ENCODE measurements at regions of chr15 and their contacts with region 1.

Region 1: DNA sequence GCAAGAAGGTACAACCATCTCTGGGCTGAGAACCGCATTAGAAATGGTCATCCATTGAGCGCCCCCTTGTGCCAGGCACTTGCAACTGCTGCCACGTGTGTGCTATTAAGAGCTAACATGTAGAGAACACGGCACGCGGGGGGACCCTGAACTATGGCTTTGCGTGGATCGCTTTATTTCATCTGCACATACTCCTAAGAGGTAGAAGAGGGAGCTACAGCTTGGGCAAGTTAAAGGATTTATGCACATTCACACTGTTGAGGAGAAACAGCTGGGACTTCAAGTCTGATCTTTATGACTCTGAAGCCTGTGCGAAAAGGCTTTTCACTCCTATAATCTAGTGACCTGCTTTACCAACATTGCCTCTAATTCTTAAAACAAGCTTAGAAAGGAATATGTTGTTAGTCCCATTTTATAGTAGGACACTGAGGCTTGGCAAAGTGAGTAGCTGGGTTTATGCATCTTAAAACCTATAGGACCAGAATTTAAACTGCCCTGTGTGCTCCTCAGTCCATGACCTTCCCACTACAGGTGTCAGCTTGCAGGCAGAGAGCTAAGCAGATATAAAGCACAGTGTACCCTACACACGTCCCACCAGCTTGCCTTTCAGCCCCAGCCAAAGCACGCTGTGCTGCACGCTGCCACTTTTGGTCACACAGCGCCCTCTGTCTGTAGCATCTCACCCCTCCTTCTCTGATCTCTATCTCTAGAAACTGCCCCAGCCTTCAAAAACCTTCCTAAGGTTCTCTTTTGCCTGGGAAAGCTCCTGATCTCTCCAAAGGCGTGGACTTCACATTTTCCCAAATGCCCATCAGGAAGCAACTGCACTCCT is 57.8 kb downstream of the STARD5 start:
- DNase-seq: peak; percentile 64 to 88 (median 84)
- ATAC-seq: peak; percentile 84
- H3K4me3 ChIP-seq: peak overlapping the region; percentile 9 to 13
- H3K4me3 Mint-ChIP-seq: peak overlapping the region; percentile 78
- H3K27ac ChIP-seq: no peak overlapping the region
- H3K27ac Mint-ChIP-seq: peak overlapping the region; percentile 7
- H3K4me1 ChIP-seq: peaks cover 29% of the 10 kb centered on the region
- H3K4me1 Mint-ChIP-seq: peaks cover 47% of the 10 kb centered on the region
- H3K27me3 ChIP-seq: no peaks in the 10 kb centered on the region
- H3K27me3 Mint-ChIP-seq: no peaks in the 10 kb centered on the region
- CTCF ChIP-seq: peak; percentile 77

Region 2: GRCh38 chr15:80455668-80456442 is 810.3 kb before region 1 on chr15:
- CTCF ChIA-PET with region 1: interaction called, 7 read pairs
- POLR2A ChIA-PET with region 1: no interaction called
- intact Hi-C with region 1: loop called in 1 of 2 experiments (anchors 5 kb)
- DNase-seq: peak; percentile 21 to 76 (median 50)
- ATAC-seq: peak; percentile 31
- H3K4me3 ChIP-seq: no peak overlapping the region
- H3K4me3 Mint-ChIP-seq: no peak overlapping the region
- H3K27ac ChIP-seq: no peak overlapping the region
- H3K27ac Mint-ChIP-seq: no peak overlapping the region
- H3K4me1 ChIP-seq: no peaks in the 10 kb centered on the region
- H3K4me1 Mint-ChIP-seq: peaks cover 2% of the 10 kb centered on the region
- H3K27me3 ChIP-seq: no peaks in the 10 kb centered on the region
- H3K27me3 Mint-ChIP-seq: peaks cover 20% of the 10 kb centered on the region
- CTCF ChIP-seq: peak; percentile 91

Region 3: GRCh38 chr15:80989518-80990478 is 276.4 kb before region 1 on chr15 and contains the start of gene MESD:
- CTCF ChIA-PET with region 1: interaction called, 12 read pairs
- POLR2A ChIA-PET with region 1: interaction called, 3 read pairs
- intact Hi-C with region 1: loop called in 1 of 2 experiments (anchors 5 kb)
- DNase-seq: peak; percentile 91 to 99 (median 98)
- ATAC-seq: peak; percentile 100
- H3K4me3 ChIP-seq: peak within 1 kb of the TSS; percentile 70 to 96
- H3K4me3 Mint-ChIP-seq: peak within 1 kb of the TSS; percentile 100
- H3K27ac ChIP-seq: peak within 1 kb of the TSS; percentile 76 to 95
- H3K27ac Mint-ChIP-seq: peak within 1 kb of the TSS; percentile 99
- H3K4me1 ChIP-seq: peaks cover 50% of the 10 kb centered on the region
- H3K4me1 Mint-ChIP-seq: peaks cover 62% of the 10 kb centered on the region
- H3K27me3 ChIP-seq: no peaks in the 10 kb centered on the region
- H3K27me3 Mint-ChIP-seq: no peaks in the 10 kb centered on the region
- CTCF ChIP-seq: no peak
- total RNA-seq, gene MESD: 6.4 to 8.1 TPM

Region 4: GRCh38 chr15:81117136-81117535 is 149.0 kb before region 1 on chr15:
- CTCF ChIA-PET with region 1: interaction called, 11 read pairs
- POLR2A ChIA-PET with region 1: interaction called, 3 read pairs
- intact Hi-C with region 1: no loop called
- DNase-seq: no peak
- ATAC-seq: no peak
- H3K4me3 ChIP-seq: no peak overlapping the region
- H3K4me3 Mint-ChIP-seq: no peak overlapping the region
- H3K27ac ChIP-seq: no peak overlapping the region
- H3K27ac Mint-ChIP-seq: no peak overlapping the region
- H3K4me1 ChIP-seq: no peaks in the 10 kb centered on the region
- H3K4me1 Mint-ChIP-seq: no peaks in the 10 kb centered on the region
- H3K27me3 ChIP-seq: peaks cover 0 to 5% of the 10 kb centered on the region in 2 experiments
- H3K27me3 Mint-ChIP-seq: peaks cover 31% of the 10 kb centered on the region
- CTCF ChIP-seq: no peak

Region 5: DNA sequence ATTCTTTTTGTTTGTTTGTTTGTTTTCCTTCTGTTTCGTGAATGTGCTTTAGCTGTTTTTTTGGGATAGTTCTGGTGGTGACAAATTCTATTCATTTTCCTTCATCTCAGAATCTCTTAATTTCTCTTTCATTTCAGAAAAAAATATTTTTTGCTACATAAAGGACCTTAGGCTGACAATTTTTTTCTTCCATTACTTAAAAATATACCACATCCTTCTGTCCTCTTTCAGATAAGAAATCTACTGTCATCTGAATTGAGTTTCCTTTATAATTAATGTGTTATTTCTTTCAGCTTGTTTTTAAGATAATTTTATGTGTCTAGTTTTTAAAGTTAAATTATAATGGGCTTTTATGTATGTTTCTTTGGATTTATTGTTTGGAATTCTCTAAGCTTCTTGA is 21.9 kb before region 1 on chr15:
- CTCF ChIA-PET with region 1: interaction called, 10 read pairs
- POLR2A ChIA-PET with region 1: no interaction called
- intact Hi-C with region 1: no loop called
- DNase-seq: no peak
- ATAC-seq: no peak
- H3K4me3 ChIP-seq: no peak overlapping the region
- H3K4me3 Mint-ChIP-seq: no peak overlapping the region
- H3K27ac ChIP-seq: no peak overlapping the region
- H3K27ac Mint-ChIP-seq: no peak overlapping the region
- H3K4me1 ChIP-seq: no peaks in the 10 kb centered on the region
- H3K4me1 Mint-ChIP-seq: no peaks in the 10 kb centered on the region
- H3K27me3 ChIP-seq: no peaks in the 10 kb centered on the region
- H3K27me3 Mint-ChIP-seq: no peaks in the 10 kb centered on the region
- CTCF ChIP-seq: no peak

Region 6: DNA sequence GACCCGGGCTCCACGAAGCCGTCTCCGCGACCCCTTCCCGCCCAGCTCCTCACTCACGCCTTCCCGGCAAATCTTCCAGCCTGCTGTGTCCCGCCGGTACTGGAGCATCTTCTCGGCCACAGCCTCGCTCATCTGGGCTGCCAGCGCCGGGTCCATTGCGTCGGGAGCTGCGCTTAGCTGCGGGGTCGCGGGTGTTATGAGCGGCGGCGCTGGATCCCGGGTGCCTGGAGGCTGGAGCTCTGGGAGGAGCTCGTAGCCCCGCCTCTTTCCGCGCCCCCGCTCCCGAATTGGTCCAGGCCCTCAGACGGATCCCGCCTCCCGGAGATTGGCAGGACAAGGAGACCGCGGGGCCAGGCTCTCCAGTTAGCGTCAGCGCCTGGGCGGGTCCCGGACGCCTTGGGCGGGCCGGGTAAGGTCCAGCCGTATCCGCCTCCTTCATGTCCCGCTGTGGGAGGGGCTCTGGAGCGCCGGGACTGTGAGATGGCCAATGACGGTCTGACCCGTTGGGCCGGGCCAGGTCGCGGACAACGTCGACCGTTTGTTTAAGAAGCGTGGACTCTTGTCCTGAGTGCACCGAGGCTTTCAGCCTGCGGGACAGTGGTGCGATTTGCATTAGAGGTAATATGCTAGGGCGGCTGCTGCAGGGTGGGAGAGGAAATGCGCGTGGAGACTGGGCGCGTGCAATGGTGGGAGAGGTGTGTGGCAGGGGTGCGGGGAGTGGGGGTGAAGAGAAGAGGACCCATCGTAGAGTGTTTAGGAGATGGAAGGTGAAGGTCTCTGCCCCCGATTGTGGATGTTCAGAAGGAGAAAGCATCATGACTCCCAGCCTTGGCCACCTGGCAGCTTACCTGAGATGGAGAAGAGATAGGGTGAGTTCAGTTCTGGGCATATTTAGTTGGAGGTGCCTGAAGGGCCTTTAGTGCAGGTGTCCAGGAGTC is 58.1 kb after region 1 on chr15 and contains the start of gene STARD5:
- CTCF ChIA-PET with region 1: interaction called, 434 read pairs
- POLR2A ChIA-PET with region 1: no interaction called
- intact Hi-C with region 1: no loop called
- DNase-seq: peak; percentile 85 to 97 (median 96)
- ATAC-seq: peak; percentile 96
- H3K4me3 ChIP-seq: peak within 1 kb of the TSS; percentile 82 to 93
- H3K4me3 Mint-ChIP-seq: peak within 1 kb of the TSS; percentile 95
- H3K27ac ChIP-seq: peak within 1 kb of the TSS; percentile 54 to 60
- H3K27ac Mint-ChIP-seq: peak within 1 kb of the TSS; percentile 93
- H3K4me1 ChIP-seq: peaks cover 27% of the 10 kb centered on the region
- H3K4me1 Mint-ChIP-seq: peaks cover 41% of the 10 kb centered on the region
- H3K27me3 ChIP-seq: no peaks in the 10 kb centered on the region
- H3K27me3 Mint-ChIP-seq: no peaks in the 10 kb centered on the region
- CTCF ChIP-seq: no peak
- total RNA-seq, gene STARD5: 13.6 to 14.3 TPM

Region 7: GRCh38 chr15:81394603-81395002 is 128.4 kb after region 1 on chr15:
- CTCF ChIA-PET with region 1: interaction called, 102 read pairs
- POLR2A ChIA-PET with region 1: interaction called, 3 read pairs
- intact Hi-C with region 1: no loop called
- DNase-seq: no peak
- ATAC-seq: no peak
- H3K4me3 ChIP-seq: no peak overlapping the region
- H3K4me3 Mint-ChIP-seq: no peak overlapping the region
- H3K27ac ChIP-seq: no peak overlapping the region
- H3K27ac Mint-ChIP-seq: no peak overlapping the region
- H3K4me1 ChIP-seq: no peaks in the 10 kb centered on the region
- H3K4me1 Mint-ChIP-seq: no peaks in the 10 kb centered on the region
- H3K27me3 ChIP-seq: no peaks in the 10 kb centered on the region
- H3K27me3 Mint-ChIP-seq: no peaks in the 10 kb centered on the region
- CTCF ChIP-seq: no peak

Measured in CD8-positive, alpha-beta T cell (primary cell).